CD8-positive, alpha-beta memory T cell (primary cell): ENCODE measurements at regions of chr7 and their contacts with region 1.

Region 1: GRCh38 chr7:127392566-127393367 is at the start of gene ZNF800:
- DNase-seq: peak; percentile 78 to 91 (median 87)
- H3K4me3 ChIP-seq: peak within 1 kb of the TSS; percentile 95
- H3K4me3 Mint-ChIP-seq: peak within 1 kb of the TSS; percentile 92 to 100 (median 98)
- H3K27ac ChIP-seq: peak within 1 kb of the TSS; percentile 99
- H3K27ac Mint-ChIP-seq: peak within 1 kb of the TSS; percentile 92 to 100 (median 99)
- H3K4me1 ChIP-seq: peaks cover 44% of the 10 kb centered on the region
- H3K4me1 Mint-ChIP-seq: peaks cover 51 to 59% (median 56%) of the 10 kb centered on the region in 3 donors
- H3K27me3 ChIP-seq: no peaks in the 10 kb centered on the region
- H3K27me3 Mint-ChIP-seq: peaks cover 0 to 8% of the 10 kb centered on the region in 2 donors
- total RNA-seq, gene ZNF800: 43.8 TPM

Region 2: DNA sequence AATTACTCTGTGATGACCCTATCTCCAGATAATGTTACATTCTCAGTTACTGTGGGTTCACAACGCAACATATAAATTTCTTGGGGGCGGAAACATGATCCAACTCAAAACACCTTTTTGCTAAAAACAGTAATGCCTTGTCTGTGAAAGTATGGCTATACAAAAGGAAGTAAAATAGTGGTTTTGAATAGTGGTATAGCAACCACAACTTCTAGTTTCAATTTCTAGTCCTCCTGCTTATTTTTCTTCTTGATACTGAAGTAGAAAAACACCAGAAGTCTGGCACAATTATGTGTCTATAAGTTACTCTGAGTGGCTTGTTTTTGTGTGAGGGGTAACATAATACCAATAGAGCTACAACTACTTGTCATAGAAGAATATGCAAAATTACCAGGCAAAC is 21.2 kb after region 1 on chr7:
- CTCF ChIA-PET with region 1: interaction called, 4 read pairs
- POLR2A ChIA-PET with region 1: interaction called, 21 read pairs
- DNase-seq: peak in 2 of 5 donors; percentile 54 to 70
- H3K4me3 ChIP-seq: peak overlapping the region; percentile 34
- H3K4me3 Mint-ChIP-seq: peak overlapping the region in 6 of 7 donors; percentile 53 to 82 (median 68)
- H3K27ac ChIP-seq: peak overlapping the region; percentile 17
- H3K27ac Mint-ChIP-seq: peak overlapping the region; percentile 64 to 97 (median 90)
- H3K4me1 ChIP-seq: peaks cover 36% of the 10 kb centered on the region
- H3K4me1 Mint-ChIP-seq: peaks cover 40 to 54% (median 50%) of the 10 kb centered on the region in 3 donors
- H3K27me3 ChIP-seq: no peaks in the 10 kb centered on the region
- H3K27me3 Mint-ChIP-seq: peaks cover 0 to 4% of the 10 kb centered on the region in 2 donors

Region 3: GRCh38 chr7:127486654-127487053 is 93.9 kb after region 1 on chr7:
- CTCF ChIA-PET with region 1: no interaction called
- POLR2A ChIA-PET with region 1: no interaction called
- DNase-seq: no peak
- H3K4me3 ChIP-seq: no peak overlapping the region
- H3K4me3 Mint-ChIP-seq: no peak overlapping the region
- H3K27ac ChIP-seq: no peak overlapping the region
- H3K27ac Mint-ChIP-seq: no peak overlapping the region
- H3K4me1 ChIP-seq: no peaks in the 10 kb centered on the region
- H3K4me1 Mint-ChIP-seq: peaks cover 10 to 12% (median 11%) of the 10 kb centered on the region in 3 donors
- H3K27me3 ChIP-seq: peaks cover 5% of the 10 kb centered on the region
- H3K27me3 Mint-ChIP-seq: peaks cover 11 to 27% of the 10 kb centered on the region in 2 donors

Region 4: DNA sequence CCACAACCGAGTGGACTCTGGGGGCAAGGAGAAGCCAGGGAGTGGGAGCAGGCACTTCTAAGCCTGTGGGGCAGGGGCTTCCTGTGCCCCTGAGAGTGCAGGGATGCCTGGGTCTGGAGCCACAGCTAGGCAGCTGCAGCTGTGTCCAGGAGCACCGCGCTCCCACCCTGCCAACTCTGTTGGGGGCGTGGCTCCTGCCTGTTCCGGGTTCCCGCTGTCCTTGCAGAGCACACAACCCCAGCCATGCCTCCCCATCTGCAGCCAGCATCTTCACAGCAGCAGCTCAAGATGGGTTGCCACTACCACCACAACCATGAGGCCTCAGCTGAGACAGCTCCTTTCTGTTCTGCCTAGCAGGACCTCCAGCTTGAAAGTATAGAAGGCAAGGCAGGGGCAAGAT is 216.5 kb after region 1 on chr7:
- CTCF ChIA-PET with region 1: no interaction called
- POLR2A ChIA-PET with region 1: no interaction called
- DNase-seq: no peak
- H3K4me3 ChIP-seq: no peak overlapping the region
- H3K4me3 Mint-ChIP-seq: no peak overlapping the region
- H3K27ac ChIP-seq: no peak overlapping the region
- H3K27ac Mint-ChIP-seq: no peak overlapping the region
- H3K4me1 ChIP-seq: no peaks in the 10 kb centered on the region
- H3K4me1 Mint-ChIP-seq: no peaks in the 10 kb centered on the region
- H3K27me3 ChIP-seq: no peaks in the 10 kb centered on the region
- H3K27me3 Mint-ChIP-seq: peaks cover 1 to 33% of the 10 kb centered on the region in 2 donors